ENCODE measurements at regions of chr17 and their contacts with region 1.

Region 1: DNA sequence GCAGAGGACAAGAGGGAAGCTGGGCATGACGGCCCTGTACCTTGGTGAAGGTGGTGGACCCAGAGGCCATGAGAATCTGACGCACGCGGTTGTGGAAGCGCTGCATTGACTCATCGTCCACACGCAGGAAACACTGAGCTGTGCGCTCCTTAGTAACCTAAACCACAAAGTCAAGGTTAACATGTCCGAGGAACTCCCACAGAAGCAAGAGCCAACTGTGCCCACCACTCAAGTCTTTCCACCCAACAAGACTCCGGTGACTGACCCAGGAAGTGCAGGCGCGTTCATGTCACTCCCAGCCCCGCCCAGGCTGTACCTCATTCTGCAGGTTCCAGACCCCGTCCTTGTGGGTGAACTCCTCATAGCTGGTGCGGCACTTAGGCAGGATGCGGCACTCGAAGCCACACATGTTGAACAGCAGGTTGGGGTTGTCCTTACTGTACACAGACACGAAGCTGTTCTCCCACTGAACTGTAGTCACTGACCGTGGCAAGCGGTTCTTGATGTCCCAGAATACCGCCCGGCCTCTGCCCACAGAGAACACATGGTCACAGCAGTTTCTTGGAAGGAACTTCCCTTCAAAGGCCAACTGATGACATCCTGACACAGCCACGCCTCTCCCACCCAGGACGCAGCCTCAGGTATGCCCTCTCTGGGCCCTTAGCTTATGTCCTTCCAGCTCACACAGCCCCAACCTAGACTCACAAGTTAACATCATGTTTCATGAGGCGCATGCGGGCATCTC is 11.5 kb downstream of the PRPF8 start:
- DNase-seq: no peak
- CTCF ChIP-seq: no peak

Region 2: DNA sequence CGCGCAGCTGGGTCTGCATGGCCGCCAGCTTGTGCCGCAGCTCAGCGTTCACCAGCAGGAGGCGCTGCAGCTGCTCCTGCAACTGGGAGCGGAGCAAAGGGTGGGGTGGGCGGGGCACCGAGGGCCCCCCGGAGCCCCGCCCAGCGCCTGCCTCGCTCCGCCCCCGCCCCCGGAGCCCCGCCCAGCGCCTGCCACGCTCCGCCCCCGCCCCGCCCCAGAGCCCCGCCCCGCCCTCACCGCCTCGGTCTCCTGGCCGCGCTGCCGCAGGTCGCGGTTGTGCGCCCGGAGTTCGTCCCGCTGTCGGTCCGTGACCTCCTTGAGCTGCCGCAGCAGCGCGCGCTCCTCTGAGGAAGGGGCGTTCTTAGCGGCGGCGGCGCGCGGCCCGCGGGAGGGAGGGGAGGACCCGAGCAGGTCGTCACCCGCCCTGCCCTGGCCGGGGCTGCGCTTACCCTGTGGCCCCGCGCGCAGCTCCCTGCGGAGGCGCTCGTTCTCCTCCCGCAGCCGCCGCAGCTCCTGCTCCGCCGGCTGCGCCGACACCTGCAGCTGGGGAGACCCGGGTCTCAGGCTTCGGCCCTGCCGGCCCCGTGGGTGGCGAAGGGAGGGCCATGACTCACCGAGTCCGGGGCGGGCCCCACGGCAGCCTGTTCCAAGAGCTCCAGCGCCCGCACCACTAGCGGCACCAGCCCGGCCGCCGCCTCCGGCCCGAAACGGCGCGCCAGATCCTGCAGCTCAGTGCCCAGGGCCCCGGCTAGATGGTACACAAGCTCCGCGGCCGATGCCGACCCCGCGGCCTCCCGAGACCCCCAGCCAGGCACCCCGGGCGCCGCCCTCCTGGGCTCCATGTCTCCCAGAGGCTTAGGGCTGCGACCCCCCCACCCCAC is 24.0 kb before region 1 on chr17:
- CTCF ChIA-PET with region 1: interaction called, 45 read pairs
- POLR2A ChIA-PET with region 1: interaction called, 4 read pairs
- DNase-seq: peak; percentile 98
- CTCF ChIP-seq: peak; percentile 100

Region 3: DNA sequence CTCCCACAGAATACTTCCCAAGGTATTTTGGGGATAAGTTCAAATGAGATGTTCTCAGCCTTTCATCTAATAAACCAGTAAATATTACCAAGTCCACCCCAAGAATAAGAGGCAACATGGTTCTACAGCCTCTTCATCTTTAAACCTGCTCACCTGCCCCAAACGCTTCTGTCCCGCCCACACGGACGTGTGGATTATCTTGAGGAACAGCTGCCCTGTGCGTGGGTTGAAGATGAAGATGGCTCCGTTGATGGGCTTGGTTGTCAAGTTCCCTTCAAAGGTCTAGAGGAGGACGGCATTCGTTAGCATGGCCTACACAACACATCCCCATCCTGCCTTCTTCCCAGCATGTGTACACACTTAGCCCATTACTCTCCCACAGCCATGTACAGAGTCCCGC is 15.1 kb before region 1 on chr17:
- CTCF ChIA-PET with region 1: interaction called, 45 read pairs
- POLR2A ChIA-PET with region 1: interaction called, 4 read pairs
- DNase-seq: no peak
- CTCF ChIP-seq: no peak

Region 4: DNA sequence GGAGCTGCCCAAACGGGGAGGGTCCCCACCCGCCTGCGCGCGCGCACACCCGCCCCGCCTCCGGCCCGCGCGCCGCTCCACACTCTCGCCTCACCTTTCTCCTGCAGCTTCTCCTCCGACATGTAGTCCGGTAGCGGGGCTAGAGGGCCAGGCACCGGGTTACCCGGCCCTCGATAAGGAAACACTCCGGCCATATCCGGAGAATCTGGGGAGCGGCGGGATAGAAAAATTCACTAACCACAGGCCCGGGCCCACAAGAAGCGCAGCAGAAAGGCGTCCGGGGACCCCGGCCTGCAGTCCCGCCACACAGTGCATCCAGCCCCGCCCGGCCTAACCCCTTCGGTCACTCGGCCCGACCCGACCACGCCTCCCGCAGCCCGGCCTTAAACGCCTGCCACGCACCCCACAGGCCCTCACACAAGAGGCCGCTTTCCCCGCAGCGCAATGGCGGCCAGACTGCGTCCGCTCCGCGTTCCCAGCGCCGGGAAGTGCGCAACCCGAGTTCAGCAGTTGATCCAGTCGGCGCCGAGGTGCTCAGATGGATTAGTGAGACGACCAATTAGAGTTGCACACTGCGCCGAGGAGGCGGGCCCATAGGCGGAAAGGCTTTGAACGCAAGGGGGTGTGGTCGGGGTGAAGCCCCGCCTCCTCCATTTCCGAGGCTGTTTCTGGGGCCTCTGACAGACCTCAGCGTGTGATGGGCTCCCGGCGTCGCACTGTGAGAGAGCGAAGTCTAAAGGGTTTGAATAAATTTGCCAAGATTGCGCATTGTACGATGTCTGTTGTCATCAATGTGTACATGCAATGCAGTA is 11.4 kb after region 1 on chr17 and contains the start of gene PRPF8:
- CTCF ChIA-PET with region 1: interaction called, 41 read pairs
- POLR2A ChIA-PET with region 1: no interaction called
- DNase-seq: peak; percentile 100
- CTCF ChIP-seq: no peak

Region 5: GRCh38 chr17:1783834-1784611 is 110.8 kb after region 1 on chr17:
- CTCF ChIA-PET with region 1: interaction called, 11 read pairs
- POLR2A ChIA-PET with region 1: no interaction called
- DNase-seq: peak; percentile 53
- CTCF ChIP-seq: peak; percentile 35